CD8-positive, alpha-beta T cell (primary cell): ENCODE measurements at regions of chr11 and their contacts with region 1.

Region 1: GRCh38 chr11:133927690-133928627 is 28.8 kb downstream of the IGSF9B start:
- DNase-seq: peak; percentile 39 to 81 (median 68)
- ATAC-seq: peak; percentile 90
- H3K4me3 ChIP-seq: peak overlapping the region; percentile 36 to 51
- H3K4me3 Mint-ChIP-seq: peak overlapping the region; percentile 82
- H3K27ac ChIP-seq: peak overlapping the region in 1 of 2 experiments; percentile 9
- H3K27ac Mint-ChIP-seq: peak overlapping the region; percentile 82
- H3K4me1 ChIP-seq: peaks cover 18% of the 10 kb centered on the region
- H3K4me1 Mint-ChIP-seq: peaks cover 17% of the 10 kb centered on the region
- H3K27me3 ChIP-seq: no peaks in the 10 kb centered on the region
- H3K27me3 Mint-ChIP-seq: no peaks in the 10 kb centered on the region
- CTCF ChIP-seq: peak; percentile 78

Region 2: GRCh38 chr11:133947321-133947756 is 19.4 kb after region 1 on chr11:
- CTCF ChIA-PET with region 1: interaction called, 19 read pairs
- POLR2A ChIA-PET with region 1: no interaction called
- intact Hi-C with region 1: loop called in 1 of 2 experiments (anchors 1 kb)
- DNase-seq: peak; percentile 41 to 81 (median 68)
- ATAC-seq: peak; percentile 32
- H3K4me3 ChIP-seq: peak overlapping the region in 1 of 2 experiments; percentile 7
- H3K4me3 Mint-ChIP-seq: peak overlapping the region; percentile 60
- H3K27ac ChIP-seq: no peak overlapping the region
- H3K27ac Mint-ChIP-seq: peak overlapping the region; percentile 79
- H3K4me1 ChIP-seq: peaks cover 58% of the 10 kb centered on the region
- H3K4me1 Mint-ChIP-seq: peaks cover 51% of the 10 kb centered on the region
- H3K27me3 ChIP-seq: peaks cover 0 to 10% of the 10 kb centered on the region in 2 experiments
- H3K27me3 Mint-ChIP-seq: no peaks in the 10 kb centered on the region
- CTCF ChIP-seq: peak; percentile 24

Region 3: GRCh38 chr11:133956650-133957633 is 29.0 kb after region 1 on chr11 and contains the start of gene IGSF9B:
- CTCF ChIA-PET with region 1: interaction called, 9 read pairs
- POLR2A ChIA-PET with region 1: interaction called, 3 read pairs
- intact Hi-C with region 1: loop called in 1 of 2 experiments (anchors 1 kb)
- DNase-seq: peak; percentile 82 to 95 (median 90)
- ATAC-seq: peak; percentile 93
- H3K4me3 ChIP-seq: peak within 1 kb of the TSS; percentile 67 to 81
- H3K4me3 Mint-ChIP-seq: peak within 1 kb of the TSS; percentile 90
- H3K27ac ChIP-seq: peak within 1 kb of the TSS; percentile 62 to 64
- H3K27ac Mint-ChIP-seq: peak within 1 kb of the TSS; percentile 86
- H3K4me1 ChIP-seq: peaks cover 29% of the 10 kb centered on the region
- H3K4me1 Mint-ChIP-seq: peaks cover 40% of the 10 kb centered on the region
- H3K27me3 ChIP-seq: peaks cover 0 to 7% of the 10 kb centered on the region in 2 experiments
- H3K27me3 Mint-ChIP-seq: peaks cover 8% of the 10 kb centered on the region
- CTCF ChIP-seq: no peak
- total RNA-seq, gene IGSF9B: 10.1 to 11.6 TPM

Region 4: DNA sequence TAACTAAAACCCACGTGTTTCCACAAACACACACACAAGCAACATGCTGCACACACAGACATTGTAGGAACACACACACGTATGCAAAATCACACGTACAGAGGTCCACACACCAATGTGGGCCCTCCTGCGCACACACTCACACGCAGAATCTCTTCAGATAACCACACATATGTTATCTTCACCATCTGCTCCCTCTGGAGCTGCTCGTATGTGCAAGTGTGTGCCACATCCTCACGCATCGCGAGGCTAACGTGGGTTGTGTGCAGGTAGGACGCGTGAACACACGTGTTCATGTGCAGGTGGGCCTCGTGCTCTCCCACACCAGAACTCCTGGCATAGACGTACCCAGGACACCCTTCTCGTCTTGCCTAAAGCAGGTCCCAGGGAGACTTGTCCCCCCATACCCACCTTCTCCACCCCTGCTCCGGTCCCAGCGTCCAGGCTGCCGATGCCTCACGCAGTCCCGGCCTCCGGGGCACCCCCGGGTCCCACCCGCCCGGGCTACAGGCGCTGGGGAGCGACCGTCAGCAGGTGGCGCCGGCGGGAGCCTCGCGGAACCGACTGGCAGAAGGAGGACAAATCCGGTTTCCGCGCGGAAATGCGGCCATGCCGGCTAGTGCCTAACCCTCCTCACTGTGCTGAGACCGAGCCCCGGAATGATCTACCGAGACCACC is 39.1 kb after region 1 on chr11:
- CTCF ChIA-PET with region 1: interaction called, 9 read pairs
- POLR2A ChIA-PET with region 1: no interaction called
- intact Hi-C with region 1: loop called (anchors 1 to 5 kb)
- DNase-seq: peak; percentile 47 to 87 (median 74)
- ATAC-seq: peak; percentile 93
- H3K4me3 ChIP-seq: peak overlapping the region; percentile 42 to 55
- H3K4me3 Mint-ChIP-seq: peak overlapping the region; percentile 89
- H3K27ac ChIP-seq: peak overlapping the region in 1 of 2 experiments; percentile 50
- H3K27ac Mint-ChIP-seq: peak overlapping the region; percentile 87
- H3K4me1 ChIP-seq: peaks cover 15% of the 10 kb centered on the region
- H3K4me1 Mint-ChIP-seq: peaks cover 13% of the 10 kb centered on the region
- H3K27me3 ChIP-seq: no peaks in the 10 kb centered on the region
- H3K27me3 Mint-ChIP-seq: no peaks in the 10 kb centered on the region
- CTCF ChIP-seq: peak; percentile 65

Region 5: GRCh38 chr11:134074766-134075165 is 146.8 kb after region 1 on chr11:
- CTCF ChIA-PET with region 1: no interaction called
- POLR2A ChIA-PET with region 1: no interaction called
- intact Hi-C with region 1: no loop called
- DNase-seq: no peak
- ATAC-seq: no peak
- H3K4me3 ChIP-seq: no peak overlapping the region
- H3K4me3 Mint-ChIP-seq: no peak overlapping the region
- H3K27ac ChIP-seq: no peak overlapping the region
- H3K27ac Mint-ChIP-seq: no peak overlapping the region
- H3K4me1 ChIP-seq: no peaks in the 10 kb centered on the region
- H3K4me1 Mint-ChIP-seq: peaks cover 8% of the 10 kb centered on the region
- H3K27me3 ChIP-seq: no peaks in the 10 kb centered on the region
- H3K27me3 Mint-ChIP-seq: no peaks in the 10 kb centered on the region
- CTCF ChIP-seq: no peak

Region 6: DNA sequence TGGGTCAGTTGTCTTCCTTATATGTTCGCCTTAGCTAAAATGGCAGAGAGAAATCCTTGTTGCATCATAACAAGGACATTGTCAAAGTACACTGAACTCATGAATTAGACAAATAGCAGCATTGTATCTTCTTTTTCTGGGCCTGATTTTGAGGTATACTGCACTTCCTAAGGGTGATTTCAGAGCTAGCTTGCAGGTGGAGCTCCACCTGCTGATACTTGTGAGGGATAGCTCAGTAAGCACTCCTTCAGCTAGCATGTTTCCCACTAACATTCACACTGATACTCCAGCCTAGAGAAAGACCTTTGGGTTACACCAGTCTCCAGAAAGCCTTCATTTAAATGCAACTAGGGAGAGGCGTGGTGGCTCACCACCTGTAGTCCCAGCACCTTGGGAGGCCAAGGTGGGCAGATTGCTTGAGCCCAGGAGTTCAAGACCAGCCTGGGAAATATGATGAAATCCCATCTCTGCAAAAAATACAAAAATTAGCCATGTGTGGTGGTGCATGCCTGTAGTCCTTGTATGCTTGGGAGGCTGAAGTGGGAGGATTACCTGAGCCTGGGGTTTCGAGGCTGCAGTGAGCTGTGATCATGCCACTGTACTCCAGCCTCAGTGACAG is 170.7 kb after region 1 on chr11:
- CTCF ChIA-PET with region 1: interaction called, 7 read pairs
- POLR2A ChIA-PET with region 1: no interaction called
- intact Hi-C with region 1: loop called in 1 of 2 experiments (anchors 1 kb)
- DNase-seq: peak in 2 of 9 experiments; percentile 30 to 48
- ATAC-seq: peak; percentile 48
- H3K4me3 ChIP-seq: no peak overlapping the region
- H3K4me3 Mint-ChIP-seq: no peak overlapping the region
- H3K27ac ChIP-seq: no peak overlapping the region
- H3K27ac Mint-ChIP-seq: no peak overlapping the region
- H3K4me1 ChIP-seq: no peaks in the 10 kb centered on the region
- H3K4me1 Mint-ChIP-seq: peaks cover 3% of the 10 kb centered on the region
- H3K27me3 ChIP-seq: no peaks in the 10 kb centered on the region
- H3K27me3 Mint-ChIP-seq: no peaks in the 10 kb centered on the region
- CTCF ChIP-seq: no peak

Region 7: GRCh38 chr11:134139873-134140331 is 211.9 kb after region 1 on chr11:
- CTCF ChIA-PET with region 1: interaction called, 17 read pairs
- POLR2A ChIA-PET with region 1: no interaction called
- intact Hi-C with region 1: loop called in 1 of 2 experiments (anchors 1 kb)
- DNase-seq: peak; percentile 22 to 74 (median 45)
- ATAC-seq: peak; percentile 73
- H3K4me3 ChIP-seq: no peak overlapping the region
- H3K4me3 Mint-ChIP-seq: no peak overlapping the region
- H3K27ac ChIP-seq: no peak overlapping the region
- H3K27ac Mint-ChIP-seq: no peak overlapping the region
- H3K4me1 ChIP-seq: no peaks in the 10 kb centered on the region
- H3K4me1 Mint-ChIP-seq: no peaks in the 10 kb centered on the region
- H3K27me3 ChIP-seq: no peaks in the 10 kb centered on the region
- H3K27me3 Mint-ChIP-seq: no peaks in the 10 kb centered on the region
- CTCF ChIP-seq: peak; percentile 63